B cell (primary cell): ENCODE measurements at regions of chr2 and their contacts with region 1.

Region 1: GRCh38 chr2:111120253-111121027 is at the start of gene BCL2L11:
- DNase-seq: peak; percentile 96
- ATAC-seq: peak; percentile 74
- H3K4me3 ChIP-seq: peak within 1 kb of the TSS; percentile 71 to 93 (median 88)
- H3K4me3 Mint-ChIP-seq: peak within 1 kb of the TSS; percentile 93
- H3K27ac ChIP-seq: peak within 1 kb of the TSS; percentile 75 to 87
- H3K27ac Mint-ChIP-seq: peak within 1 kb of the TSS; percentile 91
- H3K4me1 ChIP-seq: peaks cover 35 to 47% of the 10 kb centered on the region in 2 donors
- H3K4me1 Mint-ChIP-seq: peaks cover 33% of the 10 kb centered on the region
- H3K27me3 ChIP-seq: peaks cover 0 to 41% (median 20%) of the 10 kb centered on the region in 4 experiments
- H3K27me3 Mint-ChIP-seq: peaks cover 27% of the 10 kb centered on the region
- CTCF ChIP-seq: no peak
- total RNA-seq, gene BCL2L11: 164 and 175 TPM in 2 replicates

Region 2: GRCh38 chr2:110812726-110813645 is 307.5 kb before region 1 on chr2:
- CTCF ChIA-PET with region 1: interaction called, 15 read pairs
- POLR2A ChIA-PET with region 1: no interaction called
- intact Hi-C with region 1: loop called (anchors 2 kb)
- DNase-seq: no peak
- ATAC-seq: no peak
- H3K4me3 ChIP-seq: no peak overlapping the region
- H3K4me3 Mint-ChIP-seq: no peak overlapping the region
- H3K27ac ChIP-seq: no peak overlapping the region
- H3K27ac Mint-ChIP-seq: no peak overlapping the region
- H3K4me1 ChIP-seq: no peaks in the 10 kb centered on the region
- H3K4me1 Mint-ChIP-seq: peaks cover 3% of the 10 kb centered on the region
- H3K27me3 ChIP-seq: peaks cover 0 to 14% (median 3%) of the 10 kb centered on the region in 4 experiments
- H3K27me3 Mint-ChIP-seq: peaks cover 27% of the 10 kb centered on the region
- CTCF ChIP-seq: no peak

Region 3: GRCh38 chr2:110823165-110823564 is 297.3 kb before region 1 on chr2:
- CTCF ChIA-PET with region 1: no interaction called
- POLR2A ChIA-PET with region 1: no interaction called
- intact Hi-C with region 1: no loop called
- DNase-seq: no peak
- ATAC-seq: no peak
- H3K4me3 ChIP-seq: no peak overlapping the region
- H3K4me3 Mint-ChIP-seq: no peak overlapping the region
- H3K27ac ChIP-seq: no peak overlapping the region
- H3K27ac Mint-ChIP-seq: no peak overlapping the region
- H3K4me1 ChIP-seq: peaks cover 9 to 11% of the 10 kb centered on the region in 2 donors
- H3K4me1 Mint-ChIP-seq: peaks cover 20% of the 10 kb centered on the region
- H3K27me3 ChIP-seq: peaks cover 0 to 8% (median 0%) of the 10 kb centered on the region in 4 experiments
- H3K27me3 Mint-ChIP-seq: peaks cover 22% of the 10 kb centered on the region
- CTCF ChIP-seq: no peak

Region 4: DNA sequence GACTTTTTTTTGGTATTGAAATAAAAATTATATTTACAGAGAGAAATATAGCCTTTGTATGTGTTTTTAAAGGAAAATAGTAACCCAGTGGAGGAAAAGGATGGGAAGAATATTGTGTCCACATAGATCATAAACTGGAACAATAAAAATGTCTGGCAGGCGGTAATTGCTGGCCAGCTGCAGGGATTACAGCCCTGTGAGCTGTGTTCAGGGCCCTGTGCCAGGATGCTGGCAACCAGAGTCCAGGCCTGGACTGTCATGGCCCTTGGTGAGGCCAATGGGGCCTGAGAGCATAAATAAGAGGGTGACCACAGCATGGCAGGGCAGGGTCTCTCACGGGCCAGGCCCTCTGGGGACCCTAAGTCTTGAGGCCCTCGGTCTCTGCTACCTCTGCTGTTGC is 216.9 kb before region 1 on chr2:
- CTCF ChIA-PET with region 1: no interaction called
- POLR2A ChIA-PET with region 1: no interaction called
- intact Hi-C with region 1: no loop called
- DNase-seq: no peak
- ATAC-seq: no peak
- H3K4me3 ChIP-seq: no peak overlapping the region
- H3K4me3 Mint-ChIP-seq: no peak overlapping the region
- H3K27ac ChIP-seq: no peak overlapping the region
- H3K27ac Mint-ChIP-seq: no peak overlapping the region
- H3K4me1 ChIP-seq: no peaks in the 10 kb centered on the region
- H3K4me1 Mint-ChIP-seq: no peaks in the 10 kb centered on the region
- H3K27me3 ChIP-seq: peaks cover 0 to 3% (median 1%) of the 10 kb centered on the region in 4 experiments
- H3K27me3 Mint-ChIP-seq: peaks cover 13% of the 10 kb centered on the region
- CTCF ChIP-seq: no peak

Region 5: DNA sequence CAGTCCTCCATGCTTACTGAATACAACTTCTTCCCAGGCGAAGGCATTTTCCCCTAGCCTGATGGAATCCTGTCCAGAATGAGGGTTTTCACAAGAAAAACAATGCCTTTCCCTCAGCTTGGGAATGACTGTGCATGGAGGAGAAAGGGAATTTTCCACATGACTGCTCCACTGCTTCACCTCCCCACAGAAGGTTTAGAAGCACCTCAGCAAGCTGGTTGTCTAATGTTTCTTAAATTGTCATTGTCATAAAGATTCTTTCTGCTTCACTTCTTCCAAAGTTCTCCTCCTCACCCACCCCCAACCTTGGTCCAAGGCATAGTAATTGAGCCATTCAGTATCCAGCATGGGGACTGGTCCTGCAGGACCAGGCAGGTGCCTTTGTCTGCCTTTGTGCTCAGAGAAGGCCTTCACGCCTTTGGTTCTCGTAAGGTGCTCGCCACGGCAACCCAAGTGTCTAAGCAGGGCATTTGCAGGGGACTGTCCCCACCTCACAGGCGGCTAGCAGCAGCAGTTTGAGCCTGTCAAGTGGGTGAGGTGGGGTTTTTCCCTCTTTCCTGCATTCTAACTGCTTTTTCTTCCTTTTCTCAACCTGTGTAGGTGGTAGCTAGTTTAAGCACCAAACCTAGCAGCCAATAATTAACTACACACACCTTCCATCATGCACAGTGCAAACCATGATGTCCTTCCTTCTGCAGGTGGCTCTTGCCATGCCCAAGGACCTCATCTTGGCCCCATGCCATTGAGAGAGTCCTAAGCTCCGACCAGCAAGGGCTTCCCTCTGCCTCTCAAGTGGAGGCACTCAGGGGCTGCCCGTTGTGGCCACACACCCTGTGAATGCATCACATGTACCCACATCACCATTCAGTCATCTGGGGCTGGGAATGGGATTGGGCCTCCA is 65.4 kb before region 1 on chr2:
- CTCF ChIA-PET with region 1: interaction called, 5 read pairs
- POLR2A ChIA-PET with region 1: interaction called, 3 read pairs
- intact Hi-C with region 1: loop called (anchors 5 kb)
- DNase-seq: peak; percentile 60
- ATAC-seq: peak; percentile 68
- H3K4me3 ChIP-seq: no peak overlapping the region
- H3K4me3 Mint-ChIP-seq: peak overlapping the region; percentile 56
- H3K27ac ChIP-seq: peak overlapping the region in 1 of 2 donors; percentile 34
- H3K27ac Mint-ChIP-seq: peak overlapping the region; percentile 78
- H3K4me1 ChIP-seq: peaks cover 55 to 67% of the 10 kb centered on the region in 2 donors
- H3K4me1 Mint-ChIP-seq: peaks cover 58% of the 10 kb centered on the region
- H3K27me3 ChIP-seq: no peaks in the 10 kb centered on the region
- H3K27me3 Mint-ChIP-seq: no peaks in the 10 kb centered on the region
- CTCF ChIP-seq: no peak

Region 6: DNA sequence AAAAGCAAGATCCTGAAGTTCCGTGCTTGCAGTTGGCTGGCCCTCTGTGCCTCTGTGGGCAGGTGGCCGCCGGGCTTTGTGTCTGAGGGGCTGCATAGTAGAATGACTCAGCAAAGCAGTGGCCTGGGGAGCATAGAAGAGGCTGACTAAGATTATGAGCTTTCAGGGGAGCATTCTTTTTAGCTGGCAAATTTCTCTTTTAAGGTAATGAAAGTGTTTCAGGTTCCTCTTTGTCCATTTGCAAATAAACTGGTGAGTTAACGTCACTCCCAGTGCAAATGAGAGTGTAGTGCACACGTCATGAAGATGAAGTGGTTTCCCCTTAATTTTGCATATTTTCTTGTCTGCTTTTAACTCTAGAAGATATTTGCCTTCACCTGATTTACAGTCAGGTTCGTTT is 98.8 kb after region 1 on chr2:
- CTCF ChIA-PET with region 1: interaction called, 6 read pairs
- POLR2A ChIA-PET with region 1: interaction called, 4 read pairs
- intact Hi-C with region 1: loop called (anchors 1 kb)
- DNase-seq: peak; percentile 83
- ATAC-seq: peak; percentile 81
- H3K4me3 ChIP-seq: peak overlapping the region in 1 of 5 experiments; percentile 25
- H3K4me3 Mint-ChIP-seq: peak overlapping the region; percentile 81
- H3K27ac ChIP-seq: peak overlapping the region in 1 of 2 donors; percentile 10
- H3K27ac Mint-ChIP-seq: peak overlapping the region; percentile 88
- H3K4me1 ChIP-seq: peaks cover 23 to 27% of the 10 kb centered on the region in 2 donors
- H3K4me1 Mint-ChIP-seq: peaks cover 41% of the 10 kb centered on the region
- H3K27me3 ChIP-seq: no peaks in the 10 kb centered on the region
- H3K27me3 Mint-ChIP-seq: peaks cover 8% of the 10 kb centered on the region
- CTCF ChIP-seq: no peak